Activated CD4-positive, alpha-beta T cell treated with anti-CD3 and anti-CD28 coated beads for 36 hours (primary cell): ENCODE measurements at regions of chrX and their contacts with region 1.

Region 1: GRCh38 chrX:12955882-12956703 is 18.8 kb upstream of the TMSB4X start:
- DNase-seq: peak; percentile 80
- ATAC-seq: peak; percentile 31
- H3K4me3 Mint-ChIP-seq: peak overlapping the region; percentile 82
- H3K27ac Mint-ChIP-seq: peak overlapping the region; percentile 96
- H3K4me1 Mint-ChIP-seq: peaks cover 75% of the 10 kb centered on the region
- H3K27me3 Mint-ChIP-seq: no peaks in the 10 kb centered on the region

Region 2: GRCh38 chrX:12966151-12966550 is 10.1 kb after region 1 on chrX:
- CTCF ChIA-PET with region 1: interaction called, 13 read pairs
- POLR2A ChIA-PET with region 1: interaction called, 11 read pairs
- intact Hi-C with region 1: loop called (anchors 1 kb)
- DNase-seq: no peak
- ATAC-seq: no peak
- H3K4me3 Mint-ChIP-seq: peak overlapping the region; percentile 43
- H3K27ac Mint-ChIP-seq: peak overlapping the region; percentile 97
- H3K4me1 Mint-ChIP-seq: peaks cover 59% of the 10 kb centered on the region
- H3K27me3 Mint-ChIP-seq: no peaks in the 10 kb centered on the region

Region 3: GRCh38 chrX:12974796-12975669 is 18.9 kb after region 1 on chrX and contains the start of gene TMSB4X:
- CTCF ChIA-PET with region 1: interaction called, 22 read pairs
- POLR2A ChIA-PET with region 1: interaction called, 27 read pairs
- intact Hi-C with region 1: loop called (anchors 1 kb)
- DNase-seq: peak; percentile 91
- ATAC-seq: peak; percentile 52
- H3K4me3 Mint-ChIP-seq: peak within 1 kb of the TSS; percentile 90
- H3K27ac Mint-ChIP-seq: peak within 1 kb of the TSS; percentile 96
- H3K4me1 Mint-ChIP-seq: peaks cover 24% of the 10 kb centered on the region
- H3K27me3 Mint-ChIP-seq: no peaks in the 10 kb centered on the region
- total RNA-seq, gene TMSB4X: 3,666 to 4,468 TPM